CD4-positive, alpha-beta T cell (primary cell): ENCODE measurements at regions of chr1 and their contacts with region 1.

Region 1: DNA sequence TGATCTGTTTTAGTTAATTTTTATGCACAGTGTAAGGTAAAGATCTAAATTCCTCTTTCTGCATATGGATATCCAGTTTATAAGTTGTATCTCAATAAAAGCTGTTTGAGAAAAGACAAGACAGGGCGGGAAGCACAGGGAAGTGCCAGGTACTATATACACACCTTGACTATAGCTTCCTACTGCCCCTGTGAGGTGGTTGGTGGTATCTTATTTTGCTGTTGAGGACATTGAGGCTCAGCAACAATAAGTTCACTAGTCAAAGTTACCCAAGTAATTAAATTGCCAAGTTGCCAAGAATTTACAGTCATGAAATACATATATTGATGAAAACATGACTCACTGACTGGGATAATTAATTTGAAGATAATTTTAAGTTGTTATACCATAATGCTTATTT is 109.1 kb downstream of the CD247 start:
- DNase-seq: peak in 1 of 14 experiments; percentile 37
- ATAC-seq: peak; percentile 54
- H3K4me3 ChIP-seq: no peak overlapping the region
- H3K4me3 Mint-ChIP-seq: no peak overlapping the region
- H3K27ac ChIP-seq: no peak overlapping the region
- H3K27ac Mint-ChIP-seq: no peak overlapping the region
- H3K4me1 ChIP-seq: no peaks in the 10 kb centered on the region
- H3K4me1 Mint-ChIP-seq: no peaks in the 10 kb centered on the region
- H3K27me3 ChIP-seq: no peaks in the 10 kb centered on the region
- H3K27me3 Mint-ChIP-seq: no peaks in the 10 kb centered on the region
- CTCF ChIP-seq: no peak

Region 2: GRCh38 chr1:167263819-167264464 is 145.2 kb before region 1 on chr1:
- CTCF ChIA-PET with region 1: interaction called, 12 read pairs
- POLR2A ChIA-PET with region 1: no interaction called
- intact Hi-C with region 1: loop called in 1 of 2 experiments (anchors 10 kb)
- DNase-seq: peak in 4 of 14 experiments; percentile 4 to 29 (median 19)
- ATAC-seq: peak; percentile 57
- H3K4me3 ChIP-seq: no peak overlapping the region
- H3K4me3 Mint-ChIP-seq: no peak overlapping the region
- H3K27ac ChIP-seq: no peak overlapping the region
- H3K27ac Mint-ChIP-seq: no peak overlapping the region
- H3K4me1 ChIP-seq: peaks cover 24% of the 10 kb centered on the region
- H3K4me1 Mint-ChIP-seq: peaks cover 31% of the 10 kb centered on the region
- H3K27me3 ChIP-seq: no peaks in the 10 kb centered on the region
- H3K27me3 Mint-ChIP-seq: no peaks in the 10 kb centered on the region
- CTCF ChIP-seq: no peak

Region 3: GRCh38 chr1:167357305-167357704 is 51.9 kb before region 1 on chr1:
- CTCF ChIA-PET with region 1: no interaction called
- POLR2A ChIA-PET with region 1: no interaction called
- intact Hi-C with region 1: loop called in 1 of 2 experiments (anchors 10 kb)
- DNase-seq: no peak
- ATAC-seq: no peak
- H3K4me3 ChIP-seq: no peak overlapping the region
- H3K4me3 Mint-ChIP-seq: no peak overlapping the region
- H3K27ac ChIP-seq: no peak overlapping the region
- H3K27ac Mint-ChIP-seq: no peak overlapping the region
- H3K4me1 ChIP-seq: no peaks in the 10 kb centered on the region
- H3K4me1 Mint-ChIP-seq: peaks cover 16% of the 10 kb centered on the region
- H3K27me3 ChIP-seq: no peaks in the 10 kb centered on the region
- H3K27me3 Mint-ChIP-seq: no peaks in the 10 kb centered on the region
- CTCF ChIP-seq: no peak

Region 4: DNA sequence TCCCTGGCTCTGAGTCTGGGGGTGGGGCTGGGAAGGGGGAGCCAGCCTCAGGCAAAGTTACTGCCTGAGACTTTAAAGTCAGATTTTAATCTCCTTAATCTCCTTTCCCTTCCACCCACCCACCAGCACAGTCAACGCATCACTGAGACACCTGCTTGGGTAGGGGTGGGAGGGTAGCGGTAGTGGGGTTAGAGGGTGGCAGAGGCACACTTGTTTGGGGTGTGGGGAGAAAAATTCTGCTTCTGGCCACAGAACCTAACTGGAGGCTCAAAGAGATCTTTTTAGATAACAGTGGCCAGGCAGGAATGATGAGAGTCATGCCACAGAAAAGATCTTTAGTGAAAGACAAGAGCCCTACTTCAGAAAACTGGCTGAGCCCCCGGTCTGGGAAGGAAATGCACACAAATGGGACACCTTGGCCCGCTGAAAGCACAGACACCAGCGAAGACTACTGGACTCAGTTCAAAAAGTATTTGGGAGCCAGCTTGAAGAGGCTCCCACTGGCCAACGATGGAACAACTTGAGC is 65.1 kb after region 1 on chr1:
- CTCF ChIA-PET with region 1: no interaction called
- POLR2A ChIA-PET with region 1: no interaction called
- intact Hi-C with region 1: no loop called
- DNase-seq: peak in 8 of 14 experiments; percentile 40 to 80 (median 58)
- ATAC-seq: peak; percentile 84
- H3K4me3 ChIP-seq: peak overlapping the region; percentile 36
- H3K4me3 Mint-ChIP-seq: peak overlapping the region; percentile 78
- H3K27ac ChIP-seq: peak overlapping the region; percentile 67
- H3K27ac Mint-ChIP-seq: peak overlapping the region; percentile 100
- H3K4me1 ChIP-seq: peaks cover 74% of the 10 kb centered on the region
- H3K4me1 Mint-ChIP-seq: peaks cover 100% of the 10 kb centered on the region
- H3K27me3 ChIP-seq: no peaks in the 10 kb centered on the region
- H3K27me3 Mint-ChIP-seq: no peaks in the 10 kb centered on the region
- CTCF ChIP-seq: no peak